Left colon (tissue), 2 donors: ENCODE measurements at regions of chr3 and their contacts with region 1.

Region 1: DNA sequence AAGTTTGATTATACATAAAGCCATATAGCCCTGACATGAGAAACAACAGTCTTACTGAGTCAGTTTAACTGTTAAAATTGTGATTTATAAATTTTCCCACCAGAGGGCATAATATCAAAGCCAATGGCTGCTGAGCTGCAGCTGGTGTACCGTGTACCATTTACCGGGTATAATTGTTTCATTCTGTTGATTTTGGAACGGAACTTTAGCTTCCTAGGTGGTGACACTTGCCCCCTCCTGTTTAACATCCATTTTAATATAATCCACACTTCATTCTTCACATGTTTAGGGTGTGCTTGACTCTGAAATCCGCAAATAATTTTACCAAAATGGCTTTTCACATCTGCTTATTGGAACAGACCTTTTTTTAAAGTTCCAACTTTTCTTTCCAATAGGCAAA is 72.8 kb downstream of the SLC9A9 start:
- DNase-seq: no peak
- ATAC-seq: peak; percentile 42

Region 2: DNA sequence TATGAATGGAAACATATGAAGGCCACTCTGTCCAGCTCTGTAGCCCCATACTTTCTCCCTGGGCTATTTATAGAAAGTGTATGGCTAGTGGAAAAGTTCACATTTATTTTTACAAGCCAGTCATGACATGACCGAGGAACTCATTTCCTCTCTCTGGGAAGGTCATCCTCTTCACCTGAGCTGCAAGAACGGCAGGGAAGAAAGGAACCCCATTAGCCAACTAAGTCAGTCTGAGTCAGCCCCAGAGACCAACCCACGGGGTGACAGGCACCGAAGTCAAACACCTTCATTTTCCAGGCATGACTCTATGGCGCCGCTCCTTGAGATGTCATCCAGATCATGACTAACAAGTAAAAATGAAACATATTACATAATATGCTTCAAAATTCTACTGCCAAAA is 816.8 kb before region 1 on chr3:
- intact Hi-C with region 1: no loop called
- DNase-seq: no peak
- ATAC-seq: no peak

Region 3: DNA sequence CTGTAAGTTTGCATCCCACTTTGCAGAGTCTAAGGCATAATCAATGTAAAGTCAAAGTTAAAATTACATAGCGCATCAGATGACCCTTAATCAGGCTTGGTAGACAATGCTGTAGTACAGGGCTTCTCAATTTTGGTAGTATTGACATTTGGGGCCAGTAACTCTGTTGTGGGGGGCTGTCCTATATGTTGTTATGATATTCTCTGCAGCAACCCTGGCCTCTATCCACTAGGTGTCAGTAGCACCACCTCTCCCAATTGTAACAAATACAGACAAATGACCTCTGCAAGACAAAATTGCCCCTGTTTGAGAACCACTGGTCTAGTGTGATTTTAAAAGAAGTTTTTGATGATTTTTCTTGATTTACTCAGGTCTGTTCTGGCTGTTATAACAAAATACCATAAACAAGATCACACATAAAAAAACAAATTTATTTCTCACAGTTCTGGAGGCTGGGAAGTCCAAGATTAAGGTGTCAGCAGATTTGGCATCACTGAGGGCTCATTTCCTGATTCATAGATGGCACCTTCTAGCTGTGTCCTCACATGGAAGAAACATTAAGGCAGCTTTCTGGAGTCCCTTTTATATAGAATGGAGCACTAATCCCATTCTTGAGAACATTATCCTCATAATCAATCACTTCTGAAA is 110.4 kb after region 1 on chr3:
- intact Hi-C with region 1: loop called in 1 of 2 experiments (anchors 10 kb)
- DNase-seq: peak in 1 of 2 donors; percentile 8
- ATAC-seq: peak; percentile 45

Region 4: DNA sequence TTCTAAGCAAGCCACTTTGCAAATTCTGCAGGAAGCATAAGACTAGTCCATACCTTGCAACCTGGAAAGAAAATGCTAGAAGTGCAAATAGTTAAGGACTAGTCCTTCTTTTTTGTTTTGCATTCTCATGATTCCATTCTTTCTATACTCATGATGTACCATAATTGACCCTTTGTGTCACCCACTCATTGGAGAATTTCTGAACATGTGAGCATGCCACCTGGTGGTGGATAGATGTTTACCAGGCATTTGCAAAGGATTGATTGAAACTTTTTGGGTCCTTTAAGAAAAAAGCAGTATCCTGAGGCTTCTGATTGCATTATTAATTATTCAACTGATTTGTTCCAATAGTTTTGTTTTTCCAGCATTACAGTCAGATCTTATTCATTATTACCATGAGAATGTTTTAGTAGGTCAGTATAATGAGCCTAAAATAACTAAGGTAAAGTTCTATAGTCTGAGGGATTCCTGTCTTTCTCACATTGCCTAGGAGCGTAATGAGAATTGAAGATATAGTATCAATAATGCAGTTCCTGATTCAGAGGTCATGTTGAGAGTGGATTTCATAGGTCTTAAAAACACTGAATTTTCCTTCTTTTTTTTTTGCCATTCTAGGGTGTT is 176.0 kb after region 1 on chr3:
- intact Hi-C with region 1: loop called in 1 of 2 experiments (anchors 10 kb)
- DNase-seq: no peak
- ATAC-seq: no peak